ENCODE measurements at regions of chr19 and their contacts with region 1.

Region 1: DNA sequence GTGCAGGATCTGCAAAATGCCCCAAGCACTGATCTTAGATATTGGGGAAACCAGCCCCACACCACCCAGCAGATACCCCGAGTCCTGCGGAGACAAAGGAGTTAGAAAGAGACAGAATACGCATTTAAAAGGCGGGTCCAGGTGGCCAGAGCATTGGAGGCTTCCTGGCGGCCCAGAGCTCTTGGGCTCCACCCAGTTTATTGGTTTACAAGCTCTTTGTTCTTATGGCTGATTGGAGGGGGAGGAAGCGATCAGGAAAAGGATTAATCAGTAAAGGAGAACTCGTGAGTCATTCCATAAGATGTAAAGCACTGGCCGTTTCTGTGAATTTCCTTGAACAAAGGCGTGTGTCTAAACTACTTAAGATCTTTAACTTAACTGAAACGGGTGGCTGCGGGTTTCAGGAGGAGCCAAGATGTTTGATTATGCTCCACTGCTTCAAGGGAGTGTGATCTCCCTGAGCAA is 926 bp downstream of the ZNF587 start:
- DNase-seq: peak; percentile 35 to 56 (median 44)
- ATAC-seq: peak; percentile 48
- H3K4me3 ChIP-seq: peak overlapping the region; percentile 73
- H3K27ac ChIP-seq: peak overlapping the region; percentile 86
- H3K4me1 ChIP-seq: peaks cover 4 to 9% of the 10 kb centered on the region in 2 experiments; a peak in 3 of 5 replicates
- H3K27me3 ChIP-seq: no peaks in the 10 kb centered on the region
- CTCF ChIP-seq: no peak
- EP300 ChIP-seq: no peak
- POLR2A ChIP-seq: no peak
- RAD21 ChIP-seq: no peak

Region 2: DNA sequence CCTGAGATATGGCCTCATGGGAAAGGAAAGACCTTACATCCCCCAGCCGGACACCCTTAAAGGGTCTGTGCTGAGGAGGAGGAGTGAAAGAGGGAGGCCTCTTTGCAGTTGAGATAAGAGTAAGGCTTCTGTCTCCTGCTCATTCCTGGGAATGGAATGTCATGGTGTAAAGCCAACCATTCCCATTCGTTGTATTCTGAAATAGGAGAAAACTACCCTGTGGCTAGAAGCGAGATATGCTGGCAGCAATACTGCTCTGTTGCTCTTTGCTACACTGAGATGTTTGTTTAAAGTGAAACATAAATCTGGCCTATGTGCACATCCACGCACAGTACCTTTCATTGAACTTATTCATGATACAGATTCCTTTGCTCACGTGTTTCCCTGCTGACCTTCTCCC is 21.3 kb before region 1 on chr19:
- CTCF ChIA-PET with region 1: no interaction called
- POLR2A ChIA-PET with region 1: no interaction called
- in situ Hi-C with region 1: no loop called
- intact Hi-C with region 1: no loop called
- DNase-seq: no peak
- ATAC-seq: no peak
- H3K4me3 ChIP-seq: no peak overlapping the region
- H3K27ac ChIP-seq: no peak overlapping the region
- H3K4me1 ChIP-seq: peaks cover 0 to 5% of the 10 kb centered on the region in 2 experiments; a peak in 2 of 5 replicates
- H3K27me3 ChIP-seq: no peaks in the 10 kb centered on the region
- CTCF ChIP-seq: no peak
- EP300 ChIP-seq: no peak
- POLR2A ChIP-seq: no peak
- RAD21 ChIP-seq: no peak

Region 3: GRCh38 chr19:57914531-57914930 is 63.9 kb after region 1 on chr19:
- CTCF ChIA-PET with region 1: no interaction called
- POLR2A ChIA-PET with region 1: no interaction called
- in situ Hi-C with region 1: loop called (anchors 5 kb)
- intact Hi-C with region 1: no loop called
- DNase-seq: no peak
- ATAC-seq: no peak
- H3K4me3 ChIP-seq: no peak overlapping the region
- H3K27ac ChIP-seq: no peak overlapping the region
- H3K4me1 ChIP-seq: no peaks in the 10 kb centered on the region; a peak in 2 of 5 replicates
- H3K27me3 ChIP-seq: no peaks in the 10 kb centered on the region
- CTCF ChIP-seq: no peak
- EP300 ChIP-seq: no peak
- POLR2A ChIP-seq: no peak
- RAD21 ChIP-seq: no peak

Region 4: DNA sequence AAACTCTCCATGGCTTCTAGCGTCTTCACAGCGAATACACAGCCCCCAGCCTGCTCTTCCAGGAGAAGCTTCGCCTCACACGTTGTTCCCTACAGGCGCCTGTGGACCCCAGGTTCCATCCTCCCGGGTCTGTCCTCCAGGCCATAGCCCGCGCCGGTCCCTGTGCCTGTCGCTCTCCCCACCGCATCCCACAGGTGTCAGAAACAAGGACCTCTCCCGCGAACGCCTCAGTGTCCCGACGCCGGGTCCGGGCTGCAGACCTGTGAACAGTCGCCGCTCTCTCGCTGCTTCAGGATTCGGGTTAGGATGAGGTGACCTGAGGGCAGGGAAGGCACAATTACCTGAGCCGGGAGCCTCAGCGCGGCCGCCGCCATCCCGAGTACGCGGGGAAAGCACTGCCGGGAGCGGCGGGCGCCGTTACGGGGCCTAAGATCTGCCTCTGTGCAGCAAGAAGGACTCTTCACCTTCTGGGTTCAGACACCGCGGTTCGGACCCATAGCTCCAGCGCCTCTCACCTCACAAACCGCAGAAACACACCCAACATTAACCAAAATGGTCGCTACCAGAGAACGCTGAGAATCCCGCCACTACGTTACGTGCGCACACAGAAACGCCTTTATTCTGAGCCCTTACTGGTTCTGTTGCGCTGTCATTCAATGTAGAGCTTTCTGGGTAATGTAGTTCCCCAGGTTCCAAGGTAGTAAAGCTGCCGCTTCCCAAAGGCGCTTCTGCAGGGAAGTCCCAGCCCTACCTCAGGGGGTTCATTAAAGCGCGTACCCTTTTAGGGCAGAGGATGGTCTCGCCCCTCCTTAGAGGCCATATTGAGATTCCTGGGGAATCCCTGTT is 84.5 kb after region 1 on chr19 and contains the start of gene ZNF418:
- CTCF ChIA-PET with region 1: no interaction called
- POLR2A ChIA-PET with region 1: no interaction called
- in situ Hi-C with region 1: no loop called
- intact Hi-C with region 1: no loop called
- DNase-seq: peak in 2 of 4 experiments; percentile 12 to 18
- ATAC-seq: peak; percentile 76
- H3K4me3 ChIP-seq: peak within 1 kb of the TSS; percentile 36
- H3K27ac ChIP-seq: no peak within 1 kb of the TSS
- H3K4me1 ChIP-seq: peaks cover 0 to 4% of the 10 kb centered on the region in 2 experiments; a peak in 1 of 5 replicates
- H3K27me3 ChIP-seq: no peaks in the 10 kb centered on the region
- CTCF ChIP-seq: no peak
- EP300 ChIP-seq: no peak
- POLR2A ChIP-seq: no peak
- RAD21 ChIP-seq: no peak
- polyA plus RNA-seq, gene ZNF418: 0.11 to 0.24 TPM

Region 5: GRCh38 chr19:58059003-58059670 is 208.6 kb after region 1 on chr19 and contains the start of gene ZNF135:
- CTCF ChIA-PET with region 1: no interaction called
- POLR2A ChIA-PET with region 1: no interaction called
- in situ Hi-C with region 1: no loop called
- intact Hi-C with region 1: no loop called
- DNase-seq: no peak
- ATAC-seq: no peak
- H3K4me3 ChIP-seq: no peak within 1 kb of the TSS
- H3K27ac ChIP-seq: no peak within 1 kb of the TSS
- H3K4me1 ChIP-seq: peaks cover 0 to 9% of the 10 kb centered on the region in 2 experiments; a peak in 2 of 5 replicates
- H3K27me3 ChIP-seq: no peaks in the 10 kb centered on the region
- CTCF ChIP-seq: no peak
- EP300 ChIP-seq: no peak
- POLR2A ChIP-seq: no peak
- RAD21 ChIP-seq: no peak
- polyA plus RNA-seq, gene ZNF135: not detected

Measured in K562 (cell line).